T-cell (primary cell): ENCODE measurements at regions of chr12 and their contacts with region 1.

Region 1: DNA sequence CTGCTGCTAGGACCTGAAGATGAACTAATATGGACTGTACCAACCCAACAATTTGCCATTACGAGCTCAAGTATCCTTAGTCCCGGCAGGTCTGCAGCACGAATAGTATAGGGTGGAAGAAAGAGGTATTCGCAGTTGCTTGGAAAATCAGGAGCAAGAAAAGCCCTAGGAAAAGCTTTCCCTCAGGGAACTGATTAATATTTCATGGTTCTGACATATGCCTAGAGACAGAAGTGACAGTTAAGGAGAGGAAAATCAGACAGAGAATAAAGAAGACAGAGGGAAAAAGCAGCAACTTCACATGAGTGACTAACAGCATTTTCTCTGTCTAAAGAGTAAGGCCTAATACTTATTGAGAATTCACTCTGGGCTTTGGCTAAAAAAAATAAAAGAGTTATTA is 602.9 kb upstream of the ATP2B1 start:
- DNase-seq: no peak
- ATAC-seq: no peak
- H3K4me3 ChIP-seq: no peak overlapping the region
- H3K4me3 Mint-ChIP-seq: no peak overlapping the region
- H3K27ac ChIP-seq: no peak overlapping the region
- H3K27ac Mint-ChIP-seq: no peak overlapping the region
- H3K4me1 ChIP-seq: no peaks in the 10 kb centered on the region
- H3K4me1 Mint-ChIP-seq: no peaks in the 10 kb centered on the region
- H3K27me3 ChIP-seq: no peaks in the 10 kb centered on the region
- H3K27me3 Mint-ChIP-seq: peaks cover 0 to 10% of the 10 kb centered on the region in 2 donors

Region 2: GRCh38 chr12:90290980-90291975 is 20.3 kb before region 1 on chr12:
- CTCF ChIA-PET with region 1: interaction called in 1 of 2 experiments, 3 read pairs
- POLR2A ChIA-PET with region 1: interaction called in 1 of 2 experiments, 14 read pairs
- DNase-seq: no peak
- ATAC-seq: no peak
- H3K4me3 ChIP-seq: no peak overlapping the region
- H3K4me3 Mint-ChIP-seq: no peak overlapping the region
- H3K27ac ChIP-seq: no peak overlapping the region
- H3K27ac Mint-ChIP-seq: no peak overlapping the region
- H3K4me1 ChIP-seq: no peaks in the 10 kb centered on the region
- H3K4me1 Mint-ChIP-seq: peaks cover 0 to 6% (median 6%) of the 10 kb centered on the region in 3 donors
- H3K27me3 ChIP-seq: no peaks in the 10 kb centered on the region
- H3K27me3 Mint-ChIP-seq: peaks cover 3 to 6% of the 10 kb centered on the region in 2 donors